Vagina (tissue), 2 donors: ENCODE measurements at regions of chrX and their contacts with region 1.

Region 1: GRCh38 chrX:28520786-28521185 is 66.5 kb upstream of the IL1RAPL1 start:
- DNase-seq: no peak
- H3K4me3 ChIP-seq: no peak overlapping the region
- H3K27ac ChIP-seq: no peak overlapping the region
- H3K4me1 ChIP-seq: no peaks in the 10 kb centered on the region
- H3K27me3 ChIP-seq: no peaks in the 10 kb centered on the region
- CTCF ChIP-seq: no peak
- POLR2A ChIP-seq: no peak

Region 2: GRCh38 chrX:27254656-27255055 is 1266.1 kb before region 1 on chrX:
- intact Hi-C with region 1: loop called (anchors 5 kb)
- DNase-seq: no peak
- H3K4me3 ChIP-seq: no peak overlapping the region
- H3K27ac ChIP-seq: no peak overlapping the region
- H3K4me1 ChIP-seq: no peaks in the 10 kb centered on the region
- H3K27me3 ChIP-seq: no peaks in the 10 kb centered on the region
- CTCF ChIP-seq: no peak
- POLR2A ChIP-seq: no peak